Endothelial cell of umbilical vein (primary cell): ENCODE measurements at regions of chr6 and their contacts with region 1.

Region 1: DNA sequence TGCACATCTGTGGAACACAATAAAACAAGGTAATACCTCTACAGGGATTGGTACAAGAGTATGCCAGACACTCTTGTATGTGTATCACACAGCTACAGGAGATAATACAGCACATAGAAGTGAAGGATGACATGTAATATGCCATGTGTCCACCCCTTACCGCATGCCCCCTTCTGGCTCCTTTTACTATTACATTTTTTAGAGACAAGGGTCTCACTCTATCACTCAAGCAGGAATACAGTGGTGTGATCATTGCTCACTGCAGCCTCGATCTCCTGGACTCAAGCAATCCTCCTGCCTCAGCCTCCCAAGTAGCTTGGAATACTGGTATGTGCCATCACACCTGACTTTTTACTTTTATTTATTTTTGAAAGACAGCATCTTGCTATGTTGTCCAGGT is 4.2 kb upstream of the NCR3 start:
- DNase-seq: peak; percentile 67
- H3K4me3 ChIP-seq: no peak overlapping the region
- H3K27ac ChIP-seq: no peak overlapping the region
- H3K4me1 ChIP-seq: no peaks in the 10 kb centered on the region
- H3K27me3 ChIP-seq: no peaks in the 10 kb centered on the region
- CTCF ChIP-seq: peak; percentile 43 to 47
- POLR2A ChIP-seq: no peak

Region 2: DNA sequence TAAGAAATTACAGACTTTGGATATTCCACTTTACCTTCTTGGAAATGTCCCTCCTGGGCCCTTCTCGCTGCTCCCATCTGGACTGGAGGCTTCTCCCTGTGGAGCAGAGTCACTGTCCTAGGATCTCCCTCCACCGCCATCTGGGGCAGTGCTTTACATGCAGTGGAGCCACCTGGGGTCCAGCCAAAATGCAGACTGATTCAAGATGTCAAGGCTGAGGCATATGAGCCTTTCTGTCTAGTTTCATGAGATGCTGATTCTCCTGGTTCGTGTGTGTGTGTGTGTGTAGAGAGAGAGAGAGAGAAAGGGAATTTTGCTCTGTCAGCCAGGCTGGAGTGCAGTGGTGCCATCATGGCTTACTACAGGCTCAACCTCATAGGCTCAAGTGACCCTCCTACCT is 178.8 kb before region 1 on chr6:
- CTCF ChIA-PET with region 1: no interaction called
- POLR2A ChIA-PET with region 1: no interaction called
- dilution Hi-C with region 1: no loop called
- intact Hi-C with region 1: no loop called
- DNase-seq: no peak
- H3K4me3 ChIP-seq: no peak overlapping the region
- H3K27ac ChIP-seq: no peak overlapping the region
- H3K4me1 ChIP-seq: peaks cover 5% of the 10 kb centered on the region
- H3K27me3 ChIP-seq: peaks cover 1 to 12% of the 10 kb centered on the region in 2 experiments
- CTCF ChIP-seq: no peak
- POLR2A ChIP-seq: no peak

Region 3: GRCh38 chr6:31609519-31610406 is 12.8 kb after region 1 on chr6:
- CTCF ChIA-PET with region 1: interaction called, 10 read pairs
- POLR2A ChIA-PET with region 1: no interaction called
- dilution Hi-C with region 1: no loop called
- intact Hi-C with region 1: no loop called
- DNase-seq: no peak
- H3K4me3 ChIP-seq: no peak overlapping the region
- H3K27ac ChIP-seq: no peak overlapping the region
- H3K4me1 ChIP-seq: no peaks in the 10 kb centered on the region
- H3K27me3 ChIP-seq: peaks cover 0 to 3% of the 10 kb centered on the region in 2 experiments
- CTCF ChIP-seq: no peak
- POLR2A ChIP-seq: no peak

Region 4: DNA sequence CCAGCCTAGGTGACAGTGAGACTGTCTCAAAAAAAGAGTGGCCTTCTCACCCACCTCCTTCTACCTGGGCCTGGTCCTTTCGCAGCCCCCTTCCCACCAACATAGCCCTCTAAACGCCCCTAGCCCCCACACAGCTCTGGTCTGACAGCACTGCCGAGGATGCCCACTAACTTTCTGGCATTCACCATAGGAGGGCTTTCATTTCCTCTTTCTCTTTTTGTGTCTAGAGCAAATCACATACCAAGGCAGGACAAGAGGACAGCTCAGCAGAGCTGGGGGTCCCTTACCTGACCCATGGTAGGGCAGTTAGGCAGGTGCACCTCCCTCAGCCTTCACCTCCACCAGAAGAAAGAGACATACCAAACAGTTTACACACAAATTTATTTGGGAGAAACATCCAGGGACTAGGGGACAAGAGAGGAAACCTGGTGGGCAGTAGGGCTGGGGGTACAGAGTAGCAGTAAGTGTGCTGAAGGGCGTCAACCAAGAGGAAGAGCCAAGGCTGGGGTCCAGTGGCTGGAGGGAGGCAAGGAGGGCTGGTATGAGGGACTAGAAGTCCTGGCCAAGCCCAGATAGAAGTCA is 79.4 kb after region 1 on chr6:
- CTCF ChIA-PET with region 1: no interaction called
- POLR2A ChIA-PET with region 1: no interaction called
- dilution Hi-C with region 1: no loop called
- intact Hi-C with region 1: no loop called
- DNase-seq: no peak
- H3K4me3 ChIP-seq: no peak overlapping the region
- H3K27ac ChIP-seq: no peak overlapping the region
- H3K4me1 ChIP-seq: peaks cover 5% of the 10 kb centered on the region
- H3K27me3 ChIP-seq: no peaks in the 10 kb centered on the region
- CTCF ChIP-seq: no peak
- POLR2A ChIP-seq: no peak

Region 5: GRCh38 chr6:31940256-31940664 is 343.3 kb after region 1 on chr6:
- CTCF ChIA-PET with region 1: no interaction called
- POLR2A ChIA-PET with region 1: no interaction called
- dilution Hi-C with region 1: no loop called
- intact Hi-C with region 1: no loop called
- DNase-seq: no peak
- H3K4me3 ChIP-seq: no peak overlapping the region
- H3K27ac ChIP-seq: no peak overlapping the region
- H3K4me1 ChIP-seq: no peaks in the 10 kb centered on the region
- H3K27me3 ChIP-seq: peaks cover 3 to 11% of the 10 kb centered on the region in 2 experiments
- CTCF ChIP-seq: no peak
- POLR2A ChIP-seq: no peak